ENCODE measurements at regions of chr1 and their contacts with region 1.

Region 1: DNA sequence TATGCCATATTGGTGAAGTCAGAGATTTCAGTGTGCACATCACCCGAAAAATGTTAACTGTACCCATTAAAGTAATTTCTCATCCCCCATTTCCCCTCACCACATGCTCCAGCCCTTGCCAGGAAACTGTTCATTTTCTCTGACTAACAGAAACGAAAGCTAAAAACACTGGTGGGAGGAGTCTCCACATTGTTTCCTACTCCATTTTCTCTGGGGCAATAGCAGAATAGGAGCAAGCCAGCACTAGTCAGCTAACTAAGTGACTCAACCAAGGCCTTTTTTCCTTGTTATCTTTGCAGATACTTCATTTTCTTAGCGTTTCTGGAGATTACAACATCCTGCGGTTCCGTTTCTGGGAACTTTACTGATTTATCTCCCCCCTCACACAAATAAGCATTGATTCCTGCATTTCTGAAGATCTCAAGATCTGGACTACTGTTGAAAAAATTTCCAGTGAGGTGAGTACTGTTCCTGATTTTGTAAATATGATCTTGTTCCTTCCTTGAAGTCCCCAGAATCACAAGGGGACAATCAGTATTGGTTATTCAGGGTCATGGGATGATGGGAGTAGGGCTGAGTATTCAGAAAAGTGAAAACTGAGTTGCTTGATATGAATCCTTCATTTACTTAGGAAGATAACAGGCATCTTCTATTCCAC is at the start of gene IFI16:
- DNase-seq: peak; percentile 69
- H3K4me3 ChIP-seq: peak within 1 kb of the TSS; percentile 38 to 57 (median 46)
- H3K27ac ChIP-seq: peak within 1 kb of the TSS; percentile 75 to 82 (median 79)
- H3K4me1 ChIP-seq: peaks cover 0 to 11% (median 6%) of the 10 kb centered on the region in 4 donors
- H3K27me3 ChIP-seq: no peaks in the 10 kb centered on the region
- CTCF ChIP-seq: no peak
- EP300 ChIP-seq: no peak
- POLR2A ChIP-seq: peak; percentile 48 to 55
- total RNA-seq, gene IFI16: 42.5 to 92.6 (median 60.6) TPM

Region 2: DNA sequence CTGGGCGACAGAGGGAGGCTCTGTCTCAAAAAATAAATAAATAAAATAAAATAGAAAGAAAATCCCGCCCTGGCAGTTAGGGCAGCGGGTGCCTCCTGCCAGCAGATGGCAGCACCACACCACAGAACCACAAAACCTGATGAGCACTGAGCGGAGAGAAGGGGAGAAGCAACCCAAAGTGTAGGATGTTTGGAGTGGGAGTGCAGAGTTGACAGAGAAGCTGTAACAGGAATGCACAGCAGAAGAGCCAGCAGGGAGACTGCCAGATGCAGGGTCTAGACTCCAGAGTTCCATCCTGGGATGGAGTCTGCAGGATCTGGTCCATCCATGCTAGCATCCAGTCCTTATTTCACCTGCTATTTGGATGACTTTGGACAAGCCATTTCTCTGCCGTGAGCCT is 1046.1 kb before region 1 on chr1:
- intact Hi-C with region 1: loop called (anchors 10 kb)
- DNase-seq: peak; percentile 75
- H3K4me3 ChIP-seq: no peak overlapping the region
- H3K27ac ChIP-seq: no peak overlapping the region
- H3K4me1 ChIP-seq: peaks cover 0 to 22% (median 15%) of the 10 kb centered on the region in 4 donors
- H3K27me3 ChIP-seq: no peaks in the 10 kb centered on the region
- CTCF ChIP-seq: peak; percentile 84 to 94 (median 90)
- EP300 ChIP-seq: no peak
- POLR2A ChIP-seq: no peak

Measured in sigmoid colon (tissue), 7 donors.